Heart left ventricle (tissue), 16 donors: ENCODE measurements at regions of chrX and their contacts with region 1.

Region 1: DNA sequence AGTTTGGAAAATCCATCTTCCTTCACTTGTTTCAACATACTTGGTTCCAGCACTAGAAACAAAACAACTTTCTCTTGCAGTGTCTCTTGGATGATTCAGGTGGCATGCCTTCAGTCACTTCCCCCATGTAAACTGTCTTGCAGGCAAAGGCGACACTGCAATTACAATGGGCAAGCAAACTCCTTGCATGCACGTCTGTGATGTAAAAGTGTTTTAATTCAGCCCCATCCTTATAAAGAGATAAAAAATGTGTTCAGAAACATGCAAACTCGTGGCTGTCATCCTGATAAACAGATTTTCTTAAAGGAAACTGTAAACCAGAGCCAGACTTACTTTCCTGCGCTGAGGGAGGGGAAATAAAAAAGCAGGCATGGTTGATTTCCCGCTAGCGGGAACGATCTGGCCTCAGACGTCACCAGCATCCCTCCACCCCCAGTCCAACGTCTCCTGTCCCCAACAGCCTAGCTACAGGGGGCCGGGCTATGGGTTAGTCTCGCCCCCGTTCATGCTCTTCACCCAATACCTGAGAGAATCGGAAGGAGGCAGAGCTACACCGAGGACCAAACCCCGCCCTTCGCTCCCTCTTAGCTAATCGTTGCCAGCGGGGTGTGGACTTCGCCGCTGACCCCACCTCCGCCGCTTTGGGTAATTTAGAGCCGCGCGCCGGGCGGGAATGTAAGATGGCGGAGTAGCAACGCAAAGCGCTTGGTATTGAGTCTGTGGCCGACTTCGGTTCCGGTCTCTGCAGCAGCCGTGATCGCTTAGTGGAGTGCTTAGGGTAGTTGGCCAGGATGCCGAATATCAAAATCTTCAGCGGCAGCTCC is at the start of gene PRPS1:
- DNase-seq: peak; percentile 90 to 93 (median 91)
- ATAC-seq: peak; percentile 99 to 100 (median 100)
- H3K4me3 ChIP-seq: peak within 1 kb of the TSS; percentile 35 to 87 (median 66)
- H3K27ac ChIP-seq: peak within 1 kb of the TSS in 11 of 12 donors; percentile 55 to 83 (median 75)
- H3K4me1 ChIP-seq: peaks cover 0 to 11% (median 0%) of the 10 kb centered on the region in 12 donors
- H3K27me3 ChIP-seq: peaks cover 0 to 9% (median 0%) of the 10 kb centered on the region in 9 donors
- CTCF ChIP-seq: peak in 1 of 12 donors; percentile 28
- POLR2A ChIP-seq: peak in 1 of 2 donors; percentile 83
- total RNA-seq, gene PRPS1: 19.4 to 32.0 (median 25.0) TPM

Region 2: DNA sequence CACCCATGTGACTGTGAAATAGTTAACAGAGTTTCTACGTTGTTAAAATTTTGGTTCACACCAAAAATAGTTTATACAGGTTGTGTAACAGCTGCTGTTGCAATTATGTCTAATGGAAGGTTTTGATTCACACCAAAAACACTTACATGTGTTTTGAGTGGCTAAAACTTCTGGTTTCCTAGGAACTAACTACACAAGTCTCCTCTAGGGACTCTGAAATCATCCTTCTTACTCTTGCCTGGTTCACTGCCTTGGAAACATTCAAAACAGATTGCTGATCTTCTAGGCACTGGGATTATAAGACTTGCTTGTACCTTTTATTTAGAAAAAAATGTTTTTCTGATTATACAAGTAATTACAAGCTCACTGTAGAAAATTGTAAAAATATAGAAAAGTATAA is 613.1 kb before region 1 on chrX:
- intact Hi-C with region 1: no loop called
- DNase-seq: no peak
- ATAC-seq: peak in 2 of 4 donors; percentile 32 to 41
- H3K4me3 ChIP-seq: no peak overlapping the region
- H3K27ac ChIP-seq: no peak overlapping the region
- H3K4me1 ChIP-seq: no peaks in the 10 kb centered on the region
- H3K27me3 ChIP-seq: peaks cover 0 to 9% (median 0%) of the 10 kb centered on the region in 9 donors
- CTCF ChIP-seq: no peak
- POLR2A ChIP-seq: no peak

Region 3: DNA sequence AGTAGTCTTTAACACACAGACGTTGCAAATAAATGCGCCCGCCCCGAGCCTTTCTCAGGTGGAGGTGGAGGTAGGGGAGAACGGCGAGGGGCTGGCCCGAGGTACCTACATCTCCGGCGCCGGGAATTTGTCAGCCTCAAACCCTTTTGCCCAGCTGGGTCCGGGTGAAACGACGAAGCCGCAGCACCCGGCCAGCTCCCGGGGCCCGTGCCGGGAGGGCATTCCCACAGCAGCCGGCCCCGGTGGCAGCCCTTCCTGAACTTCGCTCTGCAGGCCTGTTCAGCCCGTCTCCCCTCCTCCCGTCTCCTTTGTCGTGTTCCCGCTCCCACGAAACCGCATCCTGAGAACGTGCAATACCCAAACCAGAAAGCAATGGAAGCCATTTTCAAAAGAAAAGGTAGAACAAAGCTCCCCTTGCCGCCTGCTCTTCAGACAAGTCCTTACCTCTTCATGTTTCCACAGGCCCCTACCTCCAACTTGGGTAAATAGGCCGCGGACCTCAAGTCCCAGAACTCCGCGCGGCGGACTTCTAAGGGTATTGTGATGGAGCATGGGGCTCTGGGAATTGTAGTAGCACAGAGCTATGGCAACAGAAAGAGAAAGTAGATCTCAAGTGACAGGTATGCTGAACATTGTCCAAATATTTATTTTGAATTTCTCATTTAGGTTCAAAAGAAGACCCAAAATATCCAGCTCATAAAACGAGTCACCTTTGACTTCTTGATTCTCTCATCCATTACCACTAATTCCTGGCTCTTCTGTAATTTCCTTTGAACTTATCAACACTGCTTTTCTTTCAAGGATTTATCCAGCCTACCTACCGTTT is 509.5 kb before region 1 on chrX and contains the start of gene RBM41:
- intact Hi-C with region 1: loop called in 1 of 10 experiments (anchors 10 kb)
- DNase-seq: peak; percentile 64 to 82 (median 77)
- ATAC-seq: peak; percentile 96 to 100 (median 100)
- H3K4me3 ChIP-seq: peak within 1 kb of the TSS; percentile 6 to 95 (median 69)
- H3K27ac ChIP-seq: peak within 1 kb of the TSS; percentile 0 to 78 (median 66)
- H3K4me1 ChIP-seq: peaks cover 0 to 17% (median 4%) of the 10 kb centered on the region in 12 donors
- H3K27me3 ChIP-seq: peaks cover 0 to 10% (median 0%) of the 10 kb centered on the region in 9 donors
- CTCF ChIP-seq: no peak
- POLR2A ChIP-seq: no peak
- total RNA-seq, gene RBM41: 8.3 to 17.7 (median 13.1) TPM

Region 4: DNA sequence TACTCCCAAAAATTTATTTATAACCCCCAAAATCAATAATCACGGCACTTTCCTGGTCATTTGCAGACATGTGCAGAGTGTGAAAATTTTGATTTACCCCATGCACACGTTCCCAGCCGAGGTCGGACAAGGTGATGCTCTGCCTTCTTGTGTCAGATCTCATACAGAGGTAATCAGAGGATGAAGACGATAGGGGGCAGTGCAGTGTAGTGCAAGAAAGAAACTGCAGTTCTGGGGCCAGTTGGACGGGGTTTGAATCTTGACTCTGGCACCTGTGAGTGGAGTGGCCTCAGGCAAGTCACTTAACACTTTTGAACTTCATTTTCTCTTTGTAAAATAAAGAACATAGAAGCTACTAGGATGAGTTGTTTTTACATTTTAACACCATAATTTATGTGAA is 90.2 kb before region 1 on chrX:
- intact Hi-C with region 1: loop called in 2 of 10 experiments (anchors 5 to 10 kb)
- DNase-seq: peak in 1 of 5 donors; percentile 9
- ATAC-seq: no peak
- H3K4me3 ChIP-seq: no peak overlapping the region
- H3K27ac ChIP-seq: no peak overlapping the region
- H3K4me1 ChIP-seq: no peaks in the 10 kb centered on the region
- H3K27me3 ChIP-seq: peaks cover 0 to 12% (median 0%) of the 10 kb centered on the region in 9 donors
- CTCF ChIP-seq: peak in 11 of 12 donors; percentile 16 to 46 (median 29)
- POLR2A ChIP-seq: no peak